Adrenal gland (tissue), 19 donors: ENCODE measurements at regions of chr10 and their contacts with region 1.

Region 1: GRCh38 chr10:21724695-21725367 is 190.8 kb downstream of the MLLT10 start:
- DNase-seq: peak; percentile 96 to 99 (median 98)
- H3K4me3 ChIP-seq: no peak overlapping the region
- H3K27ac ChIP-seq: peak overlapping the region in 3 of 5 donors; percentile 15 to 46 (median 31)
- H3K4me1 ChIP-seq: peaks cover 20 to 32% of the 10 kb centered on the region in 2 donors
- H3K27me3 ChIP-seq: no peaks in the 10 kb centered on the region
- CTCF ChIP-seq: no peak
- POLR2A ChIP-seq: no peak

Region 2: DNA sequence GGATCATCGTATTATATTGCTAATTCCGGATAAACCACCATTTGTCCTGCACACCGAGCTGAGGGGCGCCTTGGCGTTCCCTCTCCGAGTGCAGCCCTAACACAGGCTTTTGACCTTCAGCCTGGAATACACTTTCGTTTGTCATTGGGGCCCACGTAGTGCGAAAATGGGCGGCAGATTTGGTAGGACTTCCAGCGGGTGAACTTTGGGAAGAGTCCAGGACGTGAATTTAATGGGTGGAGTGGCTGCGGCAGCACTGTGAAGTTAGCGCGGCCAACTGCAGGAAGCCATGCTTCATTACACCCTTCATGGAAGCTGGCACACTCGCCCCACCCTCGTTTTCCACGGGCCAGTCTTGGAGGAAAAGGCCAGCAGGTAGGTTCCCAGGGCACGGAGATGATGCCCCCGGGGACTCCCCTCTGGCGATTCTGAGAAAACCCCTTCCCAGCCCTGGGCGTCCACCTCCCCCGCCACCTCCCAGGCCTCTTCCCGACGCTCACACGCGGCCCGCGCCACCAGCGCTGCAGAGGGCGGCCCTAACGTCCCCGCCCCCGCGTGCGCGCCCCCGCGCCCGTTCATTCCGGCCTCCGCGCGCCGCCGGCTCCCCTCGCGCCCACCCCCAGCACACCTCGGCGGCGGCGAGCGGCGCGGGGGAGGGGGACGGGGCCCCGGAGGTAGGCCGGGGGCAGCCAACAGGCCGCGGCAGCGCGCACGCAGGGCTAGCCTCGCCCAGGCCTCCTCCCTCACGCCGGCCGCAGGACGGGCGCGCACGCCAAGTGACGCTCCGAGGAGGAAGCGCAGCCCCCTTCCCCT is 191.2 kb before region 1 on chr10 and contains the start of gene MLLT10:
- intact Hi-C with region 1: loop called in 1 of 2 experiments (anchors 10 kb)
- DNase-seq: peak; percentile 94 to 97 (median 96)
- H3K4me3 ChIP-seq: peak within 1 kb of the TSS; percentile 18 to 68 (median 64)
- H3K27ac ChIP-seq: peak within 1 kb of the TSS; percentile 83 to 100 (median 96)
- H3K4me1 ChIP-seq: peaks cover 9 to 50% of the 10 kb centered on the region in 2 donors
- H3K27me3 ChIP-seq: no peaks in the 10 kb centered on the region
- CTCF ChIP-seq: peak in 4 of 6 experiments; percentile 31 to 64 (median 50)
- POLR2A ChIP-seq: peak; percentile 59 to 91
- total RNA-seq, gene MLLT10: 16.7 to 49.1 (median 30.3) TPM

Region 3: GRCh38 chr10:21771219-21771618 is 46.4 kb after region 1 on chr10:
- intact Hi-C with region 1: no loop called
- DNase-seq: no peak
- H3K4me3 ChIP-seq: no peak overlapping the region
- H3K27ac ChIP-seq: no peak overlapping the region
- H3K4me1 ChIP-seq: no peaks in the 10 kb centered on the region
- H3K27me3 ChIP-seq: no peaks in the 10 kb centered on the region
- CTCF ChIP-seq: no peak
- POLR2A ChIP-seq: no peak